Activated CD8-positive, alpha-beta T cell treated with anti-CD3 and anti-CD28 coated beads for 36 hours (primary cell): ENCODE measurements at regions of chr2 and their contacts with region 1.

Region 1: GRCh38 chr2:74206180-74206688 is 7.8 kb downstream of the MTHFD2 start:
- DNase-seq: peak; percentile 80
- ATAC-seq: peak; percentile 91
- H3K4me3 Mint-ChIP-seq: peak overlapping the region; percentile 67
- H3K27ac Mint-ChIP-seq: peak overlapping the region; percentile 97
- H3K4me1 Mint-ChIP-seq: peaks cover 59% of the 10 kb centered on the region
- H3K27me3 Mint-ChIP-seq: no peaks in the 10 kb centered on the region
- CTCF ChIP-seq: no peak

Region 2: GRCh38 chr2:74168739-74169138 is 37.5 kb before region 1 on chr2:
- CTCF ChIA-PET with region 1: no interaction called
- POLR2A ChIA-PET with region 1: interaction called, 10 read pairs
- intact Hi-C with region 1: no loop called
- DNase-seq: no peak
- ATAC-seq: peak; percentile 89
- H3K4me3 Mint-ChIP-seq: no peak overlapping the region
- H3K27ac Mint-ChIP-seq: peak overlapping the region; percentile 80
- H3K4me1 Mint-ChIP-seq: peaks cover 28% of the 10 kb centered on the region
- H3K27me3 Mint-ChIP-seq: no peaks in the 10 kb centered on the region
- CTCF ChIP-seq: no peak

Region 3: GRCh38 chr2:74223941-74224770 is 17.9 kb after region 1 on chr2:
- CTCF ChIA-PET with region 1: no interaction called
- POLR2A ChIA-PET with region 1: interaction called, 11 read pairs
- intact Hi-C with region 1: no loop called
- DNase-seq: no peak
- ATAC-seq: no peak
- H3K4me3 Mint-ChIP-seq: no peak overlapping the region
- H3K27ac Mint-ChIP-seq: peak overlapping the region; percentile 40
- H3K4me1 Mint-ChIP-seq: peaks cover 4% of the 10 kb centered on the region
- H3K27me3 Mint-ChIP-seq: no peaks in the 10 kb centered on the region
- CTCF ChIP-seq: no peak

Region 4: DNA sequence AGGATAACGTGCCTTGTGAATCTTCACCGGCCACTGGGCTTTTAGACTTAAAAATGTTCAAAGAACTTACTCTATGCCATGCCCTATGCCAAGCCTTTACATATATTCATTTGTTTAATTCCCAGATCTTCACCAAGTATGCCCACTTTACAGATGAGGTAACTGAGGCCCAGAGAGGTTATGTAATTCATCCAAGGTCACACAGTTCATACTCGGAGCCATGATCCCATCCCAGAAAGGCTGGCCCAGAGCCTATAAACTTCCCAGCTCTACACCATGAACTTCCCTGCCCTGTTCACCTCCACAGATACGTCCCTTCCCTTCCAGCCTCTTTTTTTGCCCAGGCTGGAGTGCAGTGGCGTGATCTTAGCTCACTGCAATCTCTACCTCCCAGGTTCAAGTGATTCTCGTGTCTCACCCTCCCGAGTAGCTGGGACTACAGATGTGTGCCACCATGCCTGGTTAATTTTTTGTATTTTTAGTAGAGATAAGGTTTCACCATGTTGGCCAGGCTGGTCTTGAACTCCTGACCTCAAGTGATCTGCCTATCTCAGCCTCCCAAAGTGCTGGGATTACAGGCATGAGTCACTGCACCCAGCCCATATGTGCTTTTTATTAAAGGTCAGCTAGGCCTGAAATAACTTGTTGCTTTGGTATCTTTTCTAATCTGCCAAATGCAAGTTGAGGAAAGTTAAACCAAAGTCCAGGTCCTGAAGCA is 36.3 kb after region 1 on chr2:
- CTCF ChIA-PET with region 1: no interaction called
- POLR2A ChIA-PET with region 1: no interaction called
- intact Hi-C with region 1: no loop called
- DNase-seq: no peak
- ATAC-seq: no peak
- H3K4me3 Mint-ChIP-seq: no peak overlapping the region
- H3K27ac Mint-ChIP-seq: no peak overlapping the region
- H3K4me1 Mint-ChIP-seq: no peaks in the 10 kb centered on the region
- H3K27me3 Mint-ChIP-seq: no peaks in the 10 kb centered on the region
- CTCF ChIP-seq: no peak